CD14-positive monocyte (primary cell): ENCODE measurements at regions of chr10 and their contacts with region 1.

Region 1: GRCh38 chr10:110746254-110746826 is 102.2 kb downstream of the RBM20 start:
- DNase-seq: peak; percentile 21 to 43 (median 42)
- H3K4me3 ChIP-seq: no peak overlapping the region
- H3K4me3 Mint-ChIP-seq: no peak overlapping the region
- H3K27ac ChIP-seq: no peak overlapping the region
- H3K27ac Mint-ChIP-seq: peak overlapping the region in 1 of 7 donors; percentile 18
- H3K4me1 ChIP-seq: peaks cover 10 to 17% of the 10 kb centered on the region in 2 donors
- H3K4me1 Mint-ChIP-seq: peaks cover 22% of the 10 kb centered on the region
- H3K27me3 ChIP-seq: no peaks in the 10 kb centered on the region
- H3K27me3 Mint-ChIP-seq: no peaks in the 10 kb centered on the region
- CTCF ChIP-seq: peak; percentile 90

Region 2: DNA sequence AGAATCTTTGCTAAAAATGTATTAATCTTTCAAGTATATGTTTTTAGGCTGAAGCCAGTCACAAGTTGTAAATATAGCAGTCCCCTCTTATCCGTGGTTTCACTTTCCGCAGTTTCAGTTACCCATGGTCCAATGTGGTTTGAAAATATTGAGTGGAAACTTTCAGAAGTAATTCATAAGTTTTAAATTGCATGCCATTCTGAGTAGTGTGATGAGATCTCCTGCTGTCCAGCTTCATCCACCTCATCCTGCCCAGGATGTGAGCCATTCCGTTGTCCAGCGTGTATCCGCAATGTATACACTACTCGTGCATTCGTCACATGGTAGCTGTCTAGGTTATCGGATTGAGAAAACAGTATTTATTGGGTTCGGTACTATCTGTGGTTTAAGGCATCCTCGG is 137.6 kb after region 1 on chr10:
- intact Hi-C with region 1: loop called in 1 of 2 experiments (anchors 5 kb)
- DNase-seq: no peak
- H3K4me3 ChIP-seq: no peak overlapping the region
- H3K4me3 Mint-ChIP-seq: no peak overlapping the region
- H3K27ac ChIP-seq: peak overlapping the region in 1 of 2 donors; percentile 4
- H3K27ac Mint-ChIP-seq: no peak overlapping the region
- H3K4me1 ChIP-seq: no peaks in the 10 kb centered on the region
- H3K4me1 Mint-ChIP-seq: no peaks in the 10 kb centered on the region
- H3K27me3 ChIP-seq: no peaks in the 10 kb centered on the region
- H3K27me3 Mint-ChIP-seq: no peaks in the 10 kb centered on the region
- CTCF ChIP-seq: no peak

Region 3: GRCh38 chr10:110893559-110894179 is 147.3 kb after region 1 on chr10:
- intact Hi-C with region 1: loop called in 1 of 2 experiments (anchors 5 kb)
- DNase-seq: peak; percentile 25 to 55 (median 30)
- H3K4me3 ChIP-seq: no peak overlapping the region
- H3K4me3 Mint-ChIP-seq: no peak overlapping the region
- H3K27ac ChIP-seq: no peak overlapping the region
- H3K27ac Mint-ChIP-seq: no peak overlapping the region
- H3K4me1 ChIP-seq: no peaks in the 10 kb centered on the region
- H3K4me1 Mint-ChIP-seq: peaks cover 4% of the 10 kb centered on the region
- H3K27me3 ChIP-seq: no peaks in the 10 kb centered on the region
- H3K27me3 Mint-ChIP-seq: no peaks in the 10 kb centered on the region
- CTCF ChIP-seq: peak; percentile 69